ENCODE measurements at regions of chr1 and their contacts with region 1.

Region 1: GRCh38 chr1:199684686-199685273 is 342.7 kb upstream of the NR5A2 start:
- DNase-seq: no peak
- ATAC-seq: peak; percentile 71
- H3K4me3 Mint-ChIP-seq: no peak overlapping the region
- H3K27ac Mint-ChIP-seq: no peak overlapping the region
- H3K4me1 Mint-ChIP-seq: no peaks in the 10 kb centered on the region
- H3K27me3 Mint-ChIP-seq: peaks cover 6% of the 10 kb centered on the region
- CTCF ChIP-seq: peak; percentile 61

Region 2: DNA sequence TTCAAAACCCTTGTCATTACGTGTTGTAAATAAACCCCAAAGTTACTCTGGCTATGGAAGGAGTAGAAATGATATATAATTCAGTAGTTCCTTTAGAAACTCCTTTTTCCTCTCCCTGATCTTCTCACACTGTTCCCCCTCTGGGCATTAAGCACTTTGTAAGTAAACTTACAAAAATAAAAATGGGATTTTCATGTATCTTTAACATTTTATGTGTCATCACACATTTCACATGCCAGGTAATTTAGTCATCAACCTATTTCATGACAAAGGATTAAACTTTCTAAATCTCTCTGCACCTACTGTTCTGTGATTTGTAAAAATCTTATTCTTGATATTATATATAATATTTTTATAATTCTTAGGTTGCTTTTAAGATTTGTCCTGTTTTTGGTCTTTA is 1351.0 kb before region 1 on chr1:
- CTCF ChIA-PET with region 1: no interaction called
- POLR2A ChIA-PET with region 1: no interaction called
- intact Hi-C with region 1: no loop called
- DNase-seq: no peak
- ATAC-seq: no peak
- H3K4me3 Mint-ChIP-seq: no peak overlapping the region
- H3K27ac Mint-ChIP-seq: no peak overlapping the region
- H3K4me1 Mint-ChIP-seq: no peaks in the 10 kb centered on the region
- H3K27me3 Mint-ChIP-seq: peaks cover 11% of the 10 kb centered on the region
- CTCF ChIP-seq: no peak

Region 3: DNA sequence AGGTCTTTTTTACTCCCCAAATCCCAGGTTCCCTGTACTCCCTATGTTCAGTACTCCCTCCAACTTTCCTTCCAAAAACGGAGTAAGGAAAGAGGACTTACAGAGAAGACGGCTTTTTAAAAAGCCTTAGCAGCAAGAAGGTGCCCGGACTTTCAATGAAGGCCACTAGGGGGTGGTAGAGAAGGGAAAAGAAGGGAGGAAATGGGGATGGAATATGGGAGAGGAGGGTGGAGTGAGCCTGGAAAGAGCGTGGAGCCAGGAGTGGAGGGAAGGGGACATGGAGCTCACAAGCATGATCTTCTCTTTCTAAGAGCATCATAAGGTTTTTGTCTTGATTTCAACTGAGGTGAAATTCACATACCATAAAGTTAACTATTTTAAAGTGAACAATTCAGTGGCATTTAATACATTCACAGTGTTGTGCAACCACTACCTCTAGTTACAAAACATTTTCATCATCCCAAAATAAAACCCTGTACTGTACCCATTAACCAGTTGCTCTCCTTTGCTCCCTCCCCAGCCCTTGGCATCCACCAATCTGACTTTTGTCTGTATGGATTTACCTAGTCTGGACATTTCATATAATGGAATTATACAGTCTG is 595.1 kb after region 1 on chr1:
- CTCF ChIA-PET with region 1: interaction called, 8 read pairs
- POLR2A ChIA-PET with region 1: no interaction called
- intact Hi-C with region 1: loop called (anchors 10 kb)
- DNase-seq: no peak
- ATAC-seq: no peak
- H3K4me3 Mint-ChIP-seq: no peak overlapping the region
- H3K27ac Mint-ChIP-seq: no peak overlapping the region
- H3K4me1 Mint-ChIP-seq: peaks cover 12% of the 10 kb centered on the region
- H3K27me3 Mint-ChIP-seq: peaks cover 4% of the 10 kb centered on the region
- CTCF ChIP-seq: no peak

Region 4: GRCh38 chr1:200510228-200510623 is 825.4 kb after region 1 on chr1:
- CTCF ChIA-PET with region 1: interaction called, 46 read pairs
- POLR2A ChIA-PET with region 1: no interaction called
- intact Hi-C with region 1: loop called (anchors 1 kb)
- DNase-seq: no peak
- ATAC-seq: peak; percentile 78
- H3K4me3 Mint-ChIP-seq: no peak overlapping the region
- H3K27ac Mint-ChIP-seq: no peak overlapping the region
- H3K4me1 Mint-ChIP-seq: no peaks in the 10 kb centered on the region
- H3K27me3 Mint-ChIP-seq: peaks cover 17% of the 10 kb centered on the region
- CTCF ChIP-seq: peak; percentile 89

Region 5: GRCh38 chr1:200802865-200803512 is 1118.2 kb after region 1 on chr1:
- CTCF ChIA-PET with region 1: no interaction called
- POLR2A ChIA-PET with region 1: no interaction called
- intact Hi-C with region 1: loop called (anchors 5 kb)
- DNase-seq: peak; percentile 26
- ATAC-seq: peak; percentile 81
- H3K4me3 Mint-ChIP-seq: no peak overlapping the region
- H3K27ac Mint-ChIP-seq: no peak overlapping the region
- H3K4me1 Mint-ChIP-seq: no peaks in the 10 kb centered on the region
- H3K27me3 Mint-ChIP-seq: peaks cover 10% of the 10 kb centered on the region
- CTCF ChIP-seq: peak; percentile 61